Activated CD4-positive, alpha-beta memory T cell treated with anti-CD3 and anti-CD28 coated beads for 36 hours (primary cell): ENCODE measurements at regions of chr15 and their contacts with region 1.

Region 1: GRCh38 chr15:25850154-25851111 is 12.7 kb downstream of the ATP10A start:
- DNase-seq: peak; percentile 89
- H3K4me3 Mint-ChIP-seq: peak overlapping the region; percentile 82
- H3K27ac Mint-ChIP-seq: peak overlapping the region; percentile 88
- H3K4me1 Mint-ChIP-seq: peaks cover 86% of the 10 kb centered on the region
- H3K27me3 Mint-ChIP-seq: no peaks in the 10 kb centered on the region

Region 2: GRCh38 chr15:24956111-24956838 is 894.2 kb before region 1 on chr15:
- CTCF ChIA-PET with region 1: no interaction called
- POLR2A ChIA-PET with region 1: no interaction called
- intact Hi-C with region 1: loop called (anchors 5 kb)
- DNase-seq: peak; percentile 82
- H3K4me3 Mint-ChIP-seq: peak overlapping the region; percentile 91
- H3K27ac Mint-ChIP-seq: peak overlapping the region; percentile 96
- H3K4me1 Mint-ChIP-seq: peaks cover 13% of the 10 kb centered on the region
- H3K27me3 Mint-ChIP-seq: peaks cover 1% of the 10 kb centered on the region

Region 3: GRCh38 chr15:25790000-25790660 is 60.3 kb before region 1 on chr15:
- CTCF ChIA-PET with region 1: no interaction called
- POLR2A ChIA-PET with region 1: interaction called, 4 read pairs
- intact Hi-C with region 1: loop called (anchors 1 kb)
- DNase-seq: peak; percentile 75
- H3K4me3 Mint-ChIP-seq: peak overlapping the region; percentile 25
- H3K27ac Mint-ChIP-seq: peak overlapping the region; percentile 84
- H3K4me1 Mint-ChIP-seq: peaks cover 58% of the 10 kb centered on the region
- H3K27me3 Mint-ChIP-seq: no peaks in the 10 kb centered on the region

Region 4: GRCh38 chr15:25832158-25832557 is 18.3 kb before region 1 on chr15:
- CTCF ChIA-PET with region 1: no interaction called
- POLR2A ChIA-PET with region 1: no interaction called
- intact Hi-C with region 1: loop called (anchors 2 kb)
- DNase-seq: peak; percentile 45
- H3K4me3 Mint-ChIP-seq: no peak overlapping the region
- H3K27ac Mint-ChIP-seq: peak overlapping the region; percentile 24
- H3K4me1 Mint-ChIP-seq: peaks cover 21% of the 10 kb centered on the region
- H3K27me3 Mint-ChIP-seq: no peaks in the 10 kb centered on the region

Region 5: GRCh38 chr15:26070095-26070532 is 219.7 kb after region 1 on chr15:
- CTCF ChIA-PET with region 1: no interaction called
- POLR2A ChIA-PET with region 1: no interaction called
- intact Hi-C with region 1: loop called (anchors 1 kb)
- DNase-seq: no peak
- H3K4me3 Mint-ChIP-seq: no peak overlapping the region
- H3K27ac Mint-ChIP-seq: no peak overlapping the region
- H3K4me1 Mint-ChIP-seq: peaks cover 21% of the 10 kb centered on the region
- H3K27me3 Mint-ChIP-seq: peaks cover 6% of the 10 kb centered on the region

Region 6: DNA sequence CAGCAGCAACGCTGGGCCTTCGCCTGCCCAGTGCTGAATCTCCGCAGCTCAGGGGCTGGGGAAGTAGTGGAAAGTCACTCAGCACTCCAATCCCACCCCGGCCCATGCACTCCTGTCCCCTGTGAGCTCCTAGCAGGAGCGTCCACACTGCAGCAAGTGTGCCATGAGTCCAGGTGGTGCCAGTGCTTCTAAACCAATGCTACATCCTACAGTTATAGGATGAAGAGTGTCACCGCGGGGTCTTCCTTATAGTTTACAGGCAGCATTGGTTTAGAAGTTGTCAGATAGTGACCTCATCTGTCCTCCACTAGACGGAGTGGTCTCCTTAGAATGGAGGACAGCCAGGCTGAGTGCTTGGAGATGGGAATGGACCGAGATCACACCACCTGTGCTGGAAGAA is 701.0 kb after region 1 on chr15:
- CTCF ChIA-PET with region 1: no interaction called
- POLR2A ChIA-PET with region 1: no interaction called
- intact Hi-C with region 1: no loop called
- DNase-seq: no peak
- H3K4me3 Mint-ChIP-seq: no peak overlapping the region
- H3K27ac Mint-ChIP-seq: no peak overlapping the region
- H3K4me1 Mint-ChIP-seq: no peaks in the 10 kb centered on the region
- H3K27me3 Mint-ChIP-seq: no peaks in the 10 kb centered on the region